ENCODE measurements at regions of chr21 and their contacts with region 1.

Region 1: GRCh38 chr21:39137248-39138178 is 45.7 kb downstream of the PSMG1 start:
- DNase-seq: peak; percentile 54
- ATAC-seq: peak; percentile 81
- H3K4me3 Mint-ChIP-seq: no peak overlapping the region
- H3K27ac Mint-ChIP-seq: peak overlapping the region; percentile 32; the same call in 1 of the 2 replicates
- H3K4me1 Mint-ChIP-seq: peaks cover 13% of the 10 kb centered on the region
- H3K27me3 Mint-ChIP-seq: no peaks in the 10 kb centered on the region; the same call in 1 of the 2 replicates
- CTCF ChIP-seq: no peak

Region 2: GRCh38 chr21:38467374-38467773 is 670.1 kb before region 1 on chr21:
- CTCF ChIA-PET with region 1: interaction called, 11 read pairs
- POLR2A ChIA-PET with region 1: no interaction called
- DNase-seq: no peak
- ATAC-seq: no peak
- H3K4me3 Mint-ChIP-seq: no peak overlapping the region
- H3K27ac Mint-ChIP-seq: no peak overlapping the region
- H3K4me1 Mint-ChIP-seq: peaks cover 30% of the 10 kb centered on the region
- H3K27me3 Mint-ChIP-seq: no peaks in the 10 kb centered on the region; the same call in 1 of the 2 replicates
- CTCF ChIP-seq: no peak

Region 3: DNA sequence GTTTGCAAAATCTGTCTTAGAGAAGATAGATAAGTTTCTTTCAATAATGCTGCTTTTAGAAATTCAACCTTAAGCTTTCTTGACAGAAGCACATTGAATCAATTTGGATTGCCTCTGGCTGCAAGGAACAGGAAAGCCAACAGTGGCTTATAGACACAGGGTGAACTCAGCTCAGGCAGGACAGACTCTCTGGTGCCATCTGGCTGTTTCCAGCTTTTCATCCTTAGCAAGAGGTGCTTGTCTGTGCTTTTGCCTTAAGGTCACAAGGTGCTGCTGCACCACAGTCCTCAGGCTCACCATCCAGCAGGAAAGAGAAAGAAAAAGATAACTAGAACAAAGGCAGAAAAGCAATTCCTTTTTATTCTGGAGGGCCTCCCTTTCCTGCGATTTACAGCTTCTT is 425.4 kb before region 1 on chr21:
- CTCF ChIA-PET with region 1: interaction called, 18 read pairs
- POLR2A ChIA-PET with region 1: no interaction called
- DNase-seq: peak; percentile 53
- ATAC-seq: peak; percentile 98
- H3K4me3 Mint-ChIP-seq: no peak overlapping the region
- H3K27ac Mint-ChIP-seq: no peak overlapping the region
- H3K4me1 Mint-ChIP-seq: peaks cover 10% of the 10 kb centered on the region
- H3K27me3 Mint-ChIP-seq: no peaks in the 10 kb centered on the region
- CTCF ChIP-seq: no peak

Region 4: DNA sequence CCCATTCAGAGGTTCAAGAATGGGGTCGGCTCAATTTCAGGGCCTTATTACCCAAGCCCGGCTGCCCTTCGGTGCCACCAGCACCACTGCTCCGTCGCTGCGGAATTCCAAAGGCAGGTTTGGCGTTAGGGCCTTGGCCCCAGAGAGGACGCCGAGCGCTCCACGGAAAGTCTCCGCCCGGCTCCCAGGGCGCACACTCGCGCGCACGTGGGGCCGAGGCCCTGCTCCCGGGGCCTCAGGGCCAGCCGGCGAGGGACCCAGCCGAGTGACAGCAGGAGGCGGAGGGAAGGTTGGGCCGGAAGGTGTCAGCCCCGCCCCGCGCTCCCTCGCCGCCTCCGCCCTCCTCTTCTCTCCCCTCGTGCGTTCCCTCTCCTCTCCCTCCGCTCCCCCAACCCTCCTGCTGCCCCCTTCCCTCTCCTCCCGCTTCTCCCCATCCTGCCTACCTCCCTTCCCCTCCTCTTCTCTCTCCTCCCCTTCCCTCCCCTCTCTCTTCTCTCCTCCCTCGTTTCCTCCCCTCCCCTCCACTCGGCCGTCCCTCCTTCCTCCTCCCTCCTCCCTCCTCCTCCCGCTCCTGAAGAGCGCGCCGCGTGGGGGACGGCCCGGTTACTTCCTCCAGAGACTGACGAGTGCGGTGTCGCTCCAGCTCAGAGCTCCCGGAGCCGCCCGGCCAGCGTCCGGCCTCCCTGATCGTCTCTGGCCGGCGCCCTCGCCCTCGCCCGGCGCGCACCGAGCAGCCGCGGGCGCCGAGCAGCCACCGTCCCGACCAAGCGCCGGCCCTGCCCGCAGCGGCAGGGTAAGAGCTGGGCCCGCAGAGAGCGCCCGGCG is 332.0 kb before region 1 on chr21 and contains the start of gene ETS2:
- CTCF ChIA-PET with region 1: interaction called, 13 read pairs
- POLR2A ChIA-PET with region 1: no interaction called
- DNase-seq: peak; percentile 81
- ATAC-seq: peak; percentile 80
- H3K4me3 Mint-ChIP-seq: peak within 1 kb of the TSS; percentile 94
- H3K27ac Mint-ChIP-seq: peak within 1 kb of the TSS; percentile 36; the same call in 1 of the 2 replicates
- H3K4me1 Mint-ChIP-seq: peaks cover 40% of the 10 kb centered on the region
- H3K27me3 Mint-ChIP-seq: peaks cover 6% of the 10 kb centered on the region
- CTCF ChIP-seq: no peak
- total RNA-seq, gene ETS2: 45.0 to 56.4 TPM (median 48.3 TPM) in 3 replicates

Region 5: DNA sequence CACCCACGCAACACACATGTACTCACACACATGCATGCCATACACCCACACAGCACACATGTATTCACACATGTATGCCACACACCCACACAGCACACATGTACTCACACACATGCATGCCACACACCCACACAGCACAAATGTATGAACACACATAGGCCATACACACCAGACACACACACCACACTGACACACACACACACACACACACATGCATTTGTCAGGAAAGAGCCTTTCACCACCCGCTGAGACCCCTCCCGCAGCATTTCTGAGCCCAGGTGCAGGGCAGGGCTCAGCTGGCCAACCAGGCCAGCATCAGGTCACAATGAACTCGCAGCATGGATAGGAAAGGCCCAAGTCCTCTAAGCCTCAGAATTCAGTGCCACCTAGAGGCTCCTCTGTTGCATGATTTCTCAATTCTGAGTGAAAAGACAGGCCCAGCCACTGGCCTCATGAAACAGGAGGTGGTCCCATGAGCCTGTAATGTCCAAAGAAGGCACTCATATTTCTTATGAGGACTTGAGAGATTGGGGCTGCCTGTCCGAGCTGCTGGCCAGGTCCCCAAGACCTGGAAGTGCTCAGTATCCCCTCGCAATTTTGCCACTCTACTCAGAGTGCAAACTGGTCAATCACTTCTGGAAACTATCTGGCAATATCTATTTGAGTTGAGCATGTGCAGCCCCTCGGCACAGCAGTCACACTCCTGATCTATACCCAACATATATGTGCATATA is 11.6 kb before region 1 on chr21:
- CTCF ChIA-PET with region 1: interaction called, 28 read pairs
- POLR2A ChIA-PET with region 1: interaction called, 3 read pairs
- DNase-seq: peak; percentile 70
- ATAC-seq: peak; percentile 98
- H3K4me3 Mint-ChIP-seq: no peak overlapping the region
- H3K27ac Mint-ChIP-seq: 0 out of 2 replicates have a peak overlapping the region, but pooled peaks have one; percentile 17
- H3K4me1 Mint-ChIP-seq: peaks cover 16% of the 10 kb centered on the region
- H3K27me3 Mint-ChIP-seq: no peaks in the 10 kb centered on the region
- CTCF ChIP-seq: no peak

Region 6: GRCh38 chr21:39159342-39160063 is 22.0 kb after region 1 on chr21:
- CTCF ChIA-PET with region 1: no interaction called
- POLR2A ChIA-PET with region 1: no interaction called
- DNase-seq: no peak
- ATAC-seq: no peak
- H3K4me3 Mint-ChIP-seq: no peak overlapping the region
- H3K27ac Mint-ChIP-seq: no peak overlapping the region
- H3K4me1 Mint-ChIP-seq: no peaks in the 10 kb centered on the region
- H3K27me3 Mint-ChIP-seq: peaks cover 4% of the 10 kb centered on the region; the same call in 1 of the 2 replicates
- CTCF ChIP-seq: no peak

Region 7: GRCh38 chr21:39281207-39281606 is 143.7 kb after region 1 on chr21:
- CTCF ChIA-PET with region 1: no interaction called
- POLR2A ChIA-PET with region 1: no interaction called
- DNase-seq: no peak
- ATAC-seq: no peak
- H3K4me3 Mint-ChIP-seq: no peak overlapping the region
- H3K27ac Mint-ChIP-seq: peak overlapping the region; percentile 16; the same call in 1 of the 2 replicates
- H3K4me1 Mint-ChIP-seq: no peaks in the 10 kb centered on the region
- H3K27me3 Mint-ChIP-seq: no peaks in the 10 kb centered on the region
- CTCF ChIP-seq: no peak

Region 8: DNA sequence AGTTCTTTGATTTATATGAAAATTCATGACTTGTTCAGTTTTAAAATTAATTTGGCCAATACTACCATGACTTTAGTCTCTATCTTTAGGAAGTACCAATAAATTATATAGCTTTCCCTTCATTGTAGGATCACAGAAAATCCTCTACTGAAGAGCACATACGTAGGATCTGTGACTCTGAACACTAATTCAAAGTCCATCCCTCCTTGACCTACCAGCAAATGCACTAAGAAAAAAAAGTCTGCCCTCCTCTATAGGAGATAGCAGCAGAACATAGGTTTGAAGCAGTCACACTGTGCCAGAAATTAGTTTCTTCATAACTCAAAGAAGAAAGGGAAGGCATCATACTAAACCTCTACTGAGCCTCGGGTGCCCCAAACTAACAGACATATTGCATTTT is 159.4 kb after region 1 on chr21:
- CTCF ChIA-PET with region 1: no interaction called
- POLR2A ChIA-PET with region 1: no interaction called
- DNase-seq: no peak
- ATAC-seq: no peak
- H3K4me3 Mint-ChIP-seq: no peak overlapping the region
- H3K27ac Mint-ChIP-seq: no peak overlapping the region
- H3K4me1 Mint-ChIP-seq: no peaks in the 10 kb centered on the region
- H3K27me3 Mint-ChIP-seq: no peaks in the 10 kb centered on the region
- CTCF ChIP-seq: no peak

Region 9: GRCh38 chr21:39332175-39332574 is 194.7 kb after region 1 on chr21:
- CTCF ChIA-PET with region 1: no interaction called
- POLR2A ChIA-PET with region 1: no interaction called
- DNase-seq: no peak
- ATAC-seq: peak; percentile 80
- H3K4me3 Mint-ChIP-seq: no peak overlapping the region
- H3K27ac Mint-ChIP-seq: peak overlapping the region; percentile 78; the same call in 1 of the 2 replicates
- H3K4me1 Mint-ChIP-seq: peaks cover 10% of the 10 kb centered on the region
- H3K27me3 Mint-ChIP-seq: no peaks in the 10 kb centered on the region
- CTCF ChIP-seq: no peak